ENCODE measurements at regions of chr9 and their contacts with region 1.

Region 1: GRCh38 chr9:131277910-131278701 is 1.8 kb upstream of the FAM78A start:
- DNase-seq: peak; percentile 53 to 89
- H3K4me3 ChIP-seq: peak overlapping the region; percentile 53 to 98
- H3K27ac ChIP-seq: no peak overlapping the region
- H3K4me1 ChIP-seq: peaks cover 7% of the 10 kb centered on the region in 2 donors
- H3K27me3 ChIP-seq: no peaks in the 10 kb centered on the region
- CTCF ChIP-seq: no peak

Region 2: GRCh38 chr9:131289301-131290038 is 11.4 kb after region 1 on chr9 and contains the start of gene PLPP7:
- intact Hi-C with region 1: loop called (anchors 1 kb)
- DNase-seq: peak in 1 of 2 donors; percentile 91
- H3K4me3 ChIP-seq: peak within 1 kb of the TSS; percentile 46 to 70
- H3K27ac ChIP-seq: peak within 1 kb of the TSS; percentile 65 to 70
- H3K4me1 ChIP-seq: peaks cover 3 to 11% of the 10 kb centered on the region in 2 donors
- H3K27me3 ChIP-seq: no peaks in the 10 kb centered on the region
- CTCF ChIP-seq: no peak
- total RNA-seq, gene PLPP7: 15.8 TPM